ENCODE measurements at regions of chr9 and their contacts with region 1.

Region 1: DNA sequence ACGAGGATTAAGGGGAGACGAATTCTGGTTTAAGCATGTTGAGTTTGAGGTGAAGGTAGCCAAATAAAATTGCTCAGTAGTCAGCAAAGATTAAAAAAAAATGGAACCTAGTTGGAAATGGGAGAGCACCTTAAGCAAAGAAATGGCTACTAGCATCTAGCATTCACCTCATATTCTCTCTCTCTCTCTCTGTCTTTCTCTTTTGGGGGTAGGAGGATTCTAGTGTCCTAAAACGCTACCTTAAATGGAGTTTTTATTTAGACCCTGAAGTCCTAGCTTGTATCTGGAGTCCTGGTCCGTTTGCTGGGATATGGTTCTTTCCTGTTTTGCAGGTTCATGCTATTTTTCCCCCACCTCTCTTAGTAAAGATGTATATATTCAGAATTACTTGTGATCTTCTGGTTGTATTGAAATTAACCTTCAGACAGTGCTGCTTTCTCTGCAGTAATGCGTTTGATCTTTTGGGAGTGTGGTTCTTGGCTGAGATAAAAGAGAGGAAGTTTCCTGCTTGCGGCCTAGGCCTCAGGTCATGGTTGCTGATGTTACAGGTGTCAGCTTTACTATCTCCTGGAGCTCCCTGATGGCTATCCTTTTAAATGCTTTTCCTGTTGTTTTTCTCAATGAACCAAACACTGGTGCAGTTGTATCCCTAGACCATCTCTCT is 8.0 kb downstream of the TGFBR1 start:
- DNase-seq: peak; percentile 86
- H3K4me3 Mint-ChIP-seq: peak overlapping the region; percentile 59
- H3K27ac Mint-ChIP-seq: peak overlapping the region; percentile 80
- H3K4me1 Mint-ChIP-seq: peaks cover 65% of the 10 kb centered on the region
- H3K27me3 Mint-ChIP-seq: no peaks in the 10 kb centered on the region

Region 2: DNA sequence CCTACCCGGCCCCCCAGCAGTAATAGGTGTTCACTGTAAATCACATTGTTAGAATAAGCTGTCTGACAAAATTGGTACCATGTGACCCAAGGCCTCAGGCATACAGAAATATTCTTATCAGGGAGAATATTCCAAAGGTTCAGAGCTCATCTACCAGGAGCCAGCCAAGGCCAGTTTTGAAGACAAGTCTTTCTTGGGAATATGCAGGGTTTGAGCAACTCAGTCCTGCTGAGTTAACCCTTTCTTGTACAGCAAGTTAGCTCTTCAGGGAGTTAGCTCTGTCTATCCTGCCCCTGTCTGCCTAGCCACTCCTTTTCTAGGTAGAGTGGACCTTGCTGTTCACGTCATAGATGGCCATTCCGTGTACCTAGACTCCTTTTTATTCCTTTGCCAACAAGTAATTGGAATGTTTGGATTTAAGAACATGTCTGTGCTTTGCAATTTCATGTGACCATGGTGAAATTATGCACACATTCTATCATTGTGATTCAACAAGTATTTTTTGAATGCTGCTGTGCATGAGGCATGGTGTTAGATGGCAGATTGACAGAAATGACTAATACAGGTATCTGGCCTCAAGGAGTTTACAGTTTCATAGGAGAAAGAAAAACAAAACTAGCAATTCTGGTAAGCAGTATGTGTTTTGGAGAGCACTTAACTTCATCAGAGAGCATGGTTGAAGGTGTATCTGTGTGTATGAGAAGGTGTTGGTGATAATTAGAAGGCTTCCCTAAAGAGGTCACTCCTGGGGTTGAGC is 14.7 kb after region 1 on chr9:
- intact Hi-C with region 1: loop called (anchors 2 kb)
- DNase-seq: no peak
- H3K4me3 Mint-ChIP-seq: no peak overlapping the region
- H3K27ac Mint-ChIP-seq: peak overlapping the region; percentile 22
- H3K4me1 Mint-ChIP-seq: peaks cover 56% of the 10 kb centered on the region
- H3K27me3 Mint-ChIP-seq: no peaks in the 10 kb centered on the region

Region 3: DNA sequence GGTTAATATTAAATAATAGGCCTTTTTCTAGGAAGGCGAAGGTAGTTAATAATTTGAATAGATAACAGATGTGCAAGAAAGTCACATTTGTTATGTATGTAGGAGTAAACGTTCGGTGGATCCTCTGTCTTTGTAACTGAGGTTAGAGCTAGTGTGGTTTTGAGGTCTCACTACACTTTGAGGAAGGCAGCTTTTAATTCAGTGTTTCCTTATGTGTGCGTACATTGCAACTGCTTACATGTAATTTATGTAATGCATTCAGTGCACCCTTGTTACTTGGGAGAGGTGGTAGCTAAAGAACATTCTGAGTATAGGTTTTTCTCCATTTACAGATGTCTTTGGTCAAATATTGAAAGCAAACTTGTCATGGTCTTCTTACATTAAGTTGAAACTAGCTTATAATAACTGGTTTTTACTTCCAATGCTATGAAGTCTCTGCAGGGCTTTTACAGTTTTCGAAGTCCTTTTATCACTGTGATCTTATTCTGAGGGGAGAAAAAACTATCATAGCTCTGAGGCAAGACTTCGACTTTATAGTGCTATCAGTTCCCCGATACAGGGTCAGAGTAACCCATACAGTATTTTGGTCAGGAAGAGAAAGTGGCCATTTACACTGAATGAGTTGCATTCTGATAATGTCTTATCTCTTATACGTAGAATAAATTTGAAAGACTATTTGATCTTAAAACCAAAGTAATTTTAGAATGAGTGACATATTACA is 37.7 kb after region 1 on chr9:
- intact Hi-C with region 1: no loop called
- DNase-seq: peak; percentile 68
- H3K4me3 Mint-ChIP-seq: no peak overlapping the region
- H3K27ac Mint-ChIP-seq: no peak overlapping the region
- H3K4me1 Mint-ChIP-seq: peaks cover 20% of the 10 kb centered on the region
- H3K27me3 Mint-ChIP-seq: peaks cover 3% of the 10 kb centered on the region